Activated CD4-positive, alpha-beta T cell treated with anti-CD3 and anti-CD28 coated beads for 36 hours (primary cell): ENCODE measurements at regions of chr16 and their contacts with region 1.

Region 1: DNA sequence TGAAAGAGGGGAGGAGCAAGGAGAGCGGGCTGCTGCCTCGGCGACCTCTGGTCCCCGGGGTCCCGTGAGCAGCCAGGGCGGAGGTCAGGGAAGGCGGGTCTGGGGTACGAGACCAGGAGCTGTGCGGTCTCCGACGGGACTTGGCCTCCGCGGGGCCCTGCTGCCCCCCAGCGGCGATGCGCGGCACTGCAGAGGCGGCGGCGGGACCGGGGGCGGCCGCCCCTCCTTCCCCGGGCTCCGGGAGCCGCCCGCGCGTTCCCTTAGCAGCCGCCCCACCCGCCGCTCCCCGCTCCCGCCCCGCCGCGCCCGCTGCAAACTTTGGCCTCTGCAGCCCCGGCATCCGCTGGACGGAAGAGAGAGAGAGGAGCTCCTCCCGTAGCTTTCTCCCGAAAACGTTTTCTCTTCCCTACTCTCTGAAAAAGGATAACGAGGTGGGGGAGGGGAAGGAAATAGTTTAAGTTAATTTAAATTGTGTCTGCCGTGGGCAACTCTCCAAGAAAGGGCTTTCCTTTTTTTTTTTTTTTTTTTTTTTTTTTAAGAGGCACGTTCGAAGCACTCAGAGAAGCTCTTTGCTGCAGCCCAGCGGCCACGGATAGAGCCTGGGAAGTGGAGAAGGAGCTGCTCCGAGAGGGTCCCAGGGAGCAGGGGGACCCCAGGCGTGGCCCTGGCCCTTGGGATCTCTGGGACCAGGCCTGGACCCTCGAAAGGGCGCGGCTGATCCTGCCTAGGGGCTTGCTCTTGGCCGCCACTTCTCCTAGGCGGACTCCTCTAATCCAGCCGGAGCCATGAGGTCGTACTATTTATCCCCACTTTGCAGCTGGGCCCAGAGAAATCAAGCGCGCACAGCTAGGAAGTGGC is 43.2 kb downstream of the C16orf82 start:
- DNase-seq: peak; percentile 89
- ATAC-seq: peak; percentile 92
- H3K4me3 Mint-ChIP-seq: peak overlapping the region; percentile 39
- H3K27ac Mint-ChIP-seq: no peak overlapping the region
- H3K4me1 Mint-ChIP-seq: peaks cover 3% of the 10 kb centered on the region
- H3K27me3 Mint-ChIP-seq: no peaks in the 10 kb centered on the region

Region 2: DNA sequence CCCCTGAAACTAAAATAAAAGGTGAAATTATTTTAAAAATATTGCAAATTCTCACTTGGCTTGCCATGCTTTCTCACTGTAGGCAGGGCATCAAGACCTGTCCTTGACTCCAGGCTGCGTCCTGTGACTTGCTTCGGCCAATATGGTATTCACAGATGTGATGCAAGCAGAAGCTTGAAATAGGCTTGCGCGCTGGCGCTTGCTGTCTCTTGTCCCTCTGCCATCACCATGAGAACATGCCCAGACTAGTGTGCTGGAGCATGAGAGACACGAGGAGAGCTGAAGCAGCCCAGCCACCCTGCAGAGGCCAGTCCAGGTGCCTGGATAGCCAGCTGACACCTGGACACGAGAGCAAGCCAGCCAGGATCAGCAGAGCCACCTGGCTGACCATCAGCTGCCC is 1830.4 kb before region 1 on chr16:
- CTCF ChIA-PET with region 1: no interaction called
- POLR2A ChIA-PET with region 1: no interaction called
- intact Hi-C with region 1: loop called in 1 of 2 experiments (anchors 1 kb)
- DNase-seq: no peak
- ATAC-seq: no peak
- H3K4me3 Mint-ChIP-seq: no peak overlapping the region
- H3K27ac Mint-ChIP-seq: no peak overlapping the region
- H3K4me1 Mint-ChIP-seq: no peaks in the 10 kb centered on the region
- H3K27me3 Mint-ChIP-seq: peaks cover 2% of the 10 kb centered on the region

Region 3: DNA sequence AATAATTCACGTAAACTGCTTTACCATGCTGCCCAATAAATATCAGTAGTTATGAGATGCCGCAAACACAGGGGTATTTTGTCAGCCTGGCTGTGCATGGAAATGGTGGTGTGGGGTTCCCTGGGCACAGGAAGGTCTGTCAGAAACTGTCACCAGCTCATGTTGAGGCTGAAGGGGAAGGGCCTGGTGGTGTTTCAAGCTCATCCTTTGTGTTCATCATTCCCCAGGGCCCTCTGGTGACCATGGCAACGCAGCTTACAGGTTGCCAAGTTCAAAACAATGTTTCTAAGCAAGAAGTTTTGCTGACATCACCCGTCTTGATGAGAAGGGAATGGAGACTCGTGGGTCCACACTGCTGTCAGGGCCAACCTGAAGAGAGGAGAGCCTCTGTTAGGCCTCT is 392.1 kb before region 1 on chr16:
- CTCF ChIA-PET with region 1: no interaction called
- POLR2A ChIA-PET with region 1: no interaction called
- intact Hi-C with region 1: no loop called
- DNase-seq: no peak
- ATAC-seq: no peak
- H3K4me3 Mint-ChIP-seq: no peak overlapping the region
- H3K27ac Mint-ChIP-seq: no peak overlapping the region
- H3K4me1 Mint-ChIP-seq: no peaks in the 10 kb centered on the region
- H3K27me3 Mint-ChIP-seq: peaks cover 8% of the 10 kb centered on the region

Region 4: GRCh38 chr16:26963114-26963513 is 146.8 kb before region 1 on chr16:
- CTCF ChIA-PET with region 1: no interaction called
- POLR2A ChIA-PET with region 1: no interaction called
- intact Hi-C with region 1: loop called in 1 of 2 experiments (anchors 5 kb)
- DNase-seq: peak; percentile 61
- ATAC-seq: peak; percentile 74
- H3K4me3 Mint-ChIP-seq: no peak overlapping the region
- H3K27ac Mint-ChIP-seq: no peak overlapping the region
- H3K4me1 Mint-ChIP-seq: no peaks in the 10 kb centered on the region
- H3K27me3 Mint-ChIP-seq: peaks cover 9% of the 10 kb centered on the region

Region 5: GRCh38 chr16:27048315-27048714 is 61.6 kb before region 1 on chr16:
- CTCF ChIA-PET with region 1: no interaction called
- POLR2A ChIA-PET with region 1: no interaction called
- intact Hi-C with region 1: loop called in 1 of 2 experiments (anchors 10 kb)
- DNase-seq: no peak
- ATAC-seq: no peak
- H3K4me3 Mint-ChIP-seq: no peak overlapping the region
- H3K27ac Mint-ChIP-seq: no peak overlapping the region
- H3K4me1 Mint-ChIP-seq: no peaks in the 10 kb centered on the region
- H3K27me3 Mint-ChIP-seq: peaks cover 2% of the 10 kb centered on the region

Region 6: GRCh38 chr16:27217256-27217655 is 107.4 kb after region 1 on chr16:
- CTCF ChIA-PET with region 1: no interaction called
- POLR2A ChIA-PET with region 1: no interaction called
- intact Hi-C with region 1: no loop called
- DNase-seq: no peak
- ATAC-seq: no peak
- H3K4me3 Mint-ChIP-seq: no peak overlapping the region
- H3K27ac Mint-ChIP-seq: no peak overlapping the region
- H3K4me1 Mint-ChIP-seq: no peaks in the 10 kb centered on the region
- H3K27me3 Mint-ChIP-seq: no peaks in the 10 kb centered on the region

Region 7: GRCh38 chr16:27461483-27462171 is 351.7 kb after region 1 on chr16:
- CTCF ChIA-PET with region 1: interaction called, 4 read pairs
- POLR2A ChIA-PET with region 1: no interaction called
- intact Hi-C with region 1: loop called in 1 of 2 experiments (anchors 1 kb)
- DNase-seq: no peak
- ATAC-seq: no peak
- H3K4me3 Mint-ChIP-seq: no peak overlapping the region
- H3K27ac Mint-ChIP-seq: no peak overlapping the region
- H3K4me1 Mint-ChIP-seq: peaks cover 21% of the 10 kb centered on the region
- H3K27me3 Mint-ChIP-seq: no peaks in the 10 kb centered on the region